Activated B cell treated with CpG ODN at 0.5 μM for 24 hours (primary cell): ENCODE measurements at regions of chr12 and their contacts with region 1.

Region 1: DNA sequence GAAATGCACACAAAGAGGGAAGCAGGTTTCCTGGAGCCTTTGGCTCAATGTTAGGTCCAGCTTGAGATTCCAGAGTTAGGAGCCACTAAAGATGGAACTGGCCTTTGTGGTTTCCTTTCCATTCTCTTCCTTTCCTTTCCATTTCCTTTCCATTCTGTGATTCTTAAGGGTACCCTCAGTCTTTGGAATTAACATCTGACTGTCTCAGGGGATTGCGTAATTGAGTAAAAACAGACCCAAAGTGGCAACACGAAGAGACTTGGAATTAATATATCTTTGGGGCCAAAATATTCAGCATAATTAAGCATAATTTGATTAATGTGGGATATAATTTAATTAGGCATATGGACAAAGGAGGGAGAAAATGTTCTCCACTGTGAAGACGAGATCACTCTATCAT is 205.6 kb downstream of the CRADD start:
- DNase-seq: no peak
- ATAC-seq: no peak
- H3K4me3 Mint-ChIP-seq: no peak overlapping the region
- H3K27ac Mint-ChIP-seq: no peak overlapping the region
- H3K4me1 Mint-ChIP-seq: no peaks in the 10 kb centered on the region
- H3K27me3 Mint-ChIP-seq: no peaks in the 10 kb centered on the region
- CTCF ChIP-seq: no peak

Region 2: GRCh38 chr12:92810370-92810769 is 1072.4 kb before region 1 on chr12:
- CTCF ChIA-PET with region 1: no interaction called
- POLR2A ChIA-PET with region 1: interaction called, 10 read pairs
- intact Hi-C with region 1: no loop called
- DNase-seq: no peak
- ATAC-seq: no peak
- H3K4me3 Mint-ChIP-seq: no peak overlapping the region
- H3K27ac Mint-ChIP-seq: no peak overlapping the region
- H3K4me1 Mint-ChIP-seq: peaks cover 15% of the 10 kb centered on the region
- H3K27me3 Mint-ChIP-seq: no peaks in the 10 kb centered on the region
- CTCF ChIP-seq: no peak

Region 3: GRCh38 chr12:93441617-93442410 is 440.9 kb before region 1 on chr12 and contains the start of gene UBE2N:
- CTCF ChIA-PET with region 1: no interaction called
- POLR2A ChIA-PET with region 1: no interaction called
- intact Hi-C with region 1: no loop called
- DNase-seq: peak; percentile 99
- ATAC-seq: peak; percentile 84
- H3K4me3 Mint-ChIP-seq: peak within 1 kb of the TSS; percentile 96
- H3K27ac Mint-ChIP-seq: peak within 1 kb of the TSS; percentile 96
- H3K4me1 Mint-ChIP-seq: peaks cover 56% of the 10 kb centered on the region
- H3K27me3 Mint-ChIP-seq: no peaks in the 10 kb centered on the region
- CTCF ChIP-seq: no peak
- total RNA-seq, gene UBE2N: 152 and 163 TPM in 2 replicates

Region 4: GRCh38 chr12:93857279-93857938 is 25.4 kb before region 1 on chr12:
- CTCF ChIA-PET with region 1: no interaction called
- POLR2A ChIA-PET with region 1: no interaction called
- intact Hi-C with region 1: no loop called
- DNase-seq: no peak
- ATAC-seq: no peak
- H3K4me3 Mint-ChIP-seq: no peak overlapping the region
- H3K27ac Mint-ChIP-seq: no peak overlapping the region
- H3K4me1 Mint-ChIP-seq: no peaks in the 10 kb centered on the region
- H3K27me3 Mint-ChIP-seq: no peaks in the 10 kb centered on the region
- CTCF ChIP-seq: no peak